Sigmoid colon (tissue), 7 donors: ENCODE measurements at regions of chr12 and their contacts with region 1.

Region 1: DNA sequence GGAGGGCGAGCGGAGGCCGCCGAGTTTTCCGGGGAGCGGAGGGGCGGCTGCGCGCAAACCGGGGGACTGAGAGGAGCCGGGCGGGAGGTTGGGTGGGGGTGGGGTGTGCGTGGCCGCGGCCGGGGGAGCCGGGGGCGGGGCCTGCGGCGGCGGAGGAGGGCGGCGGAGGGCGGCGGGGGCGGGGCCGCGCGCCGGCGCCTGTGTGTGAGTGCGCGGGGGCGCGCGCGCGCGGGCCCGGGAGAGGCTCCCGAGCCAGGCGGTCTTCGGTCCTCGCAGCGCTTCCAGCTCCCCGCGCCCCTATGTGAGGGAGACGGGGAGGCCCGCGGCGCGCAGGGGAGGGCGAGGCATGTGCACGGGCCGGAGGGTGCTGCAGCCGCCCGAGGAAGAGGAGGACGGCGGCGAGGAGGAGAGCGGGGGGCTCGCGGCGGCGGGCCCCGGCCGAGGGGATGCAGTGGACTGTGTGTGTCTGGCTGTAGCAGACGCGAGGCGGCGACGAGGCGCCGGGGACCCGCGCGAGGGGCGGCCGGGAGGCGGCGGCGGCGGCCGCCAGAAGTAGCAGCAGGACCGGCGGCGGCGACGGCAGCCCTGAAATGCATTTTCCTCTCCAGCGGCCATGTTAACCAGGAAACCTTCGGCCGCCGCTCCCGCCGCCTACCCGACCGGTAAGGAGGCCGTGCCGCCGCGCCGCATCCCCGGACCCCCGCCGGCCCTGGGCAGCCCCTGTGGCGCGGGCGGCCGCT is at the start of gene DYRK2:
- DNase-seq: peak; percentile 90
- H3K4me3 ChIP-seq: peak within 1 kb of the TSS; percentile 92 to 100 (median 98)
- H3K27ac ChIP-seq: peak within 1 kb of the TSS; percentile 97 to 100 (median 98)
- H3K4me1 ChIP-seq: peaks cover 0 to 46% (median 36%) of the 10 kb centered on the region in 4 donors
- H3K27me3 ChIP-seq: no peaks in the 10 kb centered on the region
- CTCF ChIP-seq: no peak
- EP300 ChIP-seq: no peak
- POLR2A ChIP-seq: peak; percentile 39 to 65
- total RNA-seq, gene DYRK2: 17.6 to 32.4 (median 23.3) TPM

Region 2: DNA sequence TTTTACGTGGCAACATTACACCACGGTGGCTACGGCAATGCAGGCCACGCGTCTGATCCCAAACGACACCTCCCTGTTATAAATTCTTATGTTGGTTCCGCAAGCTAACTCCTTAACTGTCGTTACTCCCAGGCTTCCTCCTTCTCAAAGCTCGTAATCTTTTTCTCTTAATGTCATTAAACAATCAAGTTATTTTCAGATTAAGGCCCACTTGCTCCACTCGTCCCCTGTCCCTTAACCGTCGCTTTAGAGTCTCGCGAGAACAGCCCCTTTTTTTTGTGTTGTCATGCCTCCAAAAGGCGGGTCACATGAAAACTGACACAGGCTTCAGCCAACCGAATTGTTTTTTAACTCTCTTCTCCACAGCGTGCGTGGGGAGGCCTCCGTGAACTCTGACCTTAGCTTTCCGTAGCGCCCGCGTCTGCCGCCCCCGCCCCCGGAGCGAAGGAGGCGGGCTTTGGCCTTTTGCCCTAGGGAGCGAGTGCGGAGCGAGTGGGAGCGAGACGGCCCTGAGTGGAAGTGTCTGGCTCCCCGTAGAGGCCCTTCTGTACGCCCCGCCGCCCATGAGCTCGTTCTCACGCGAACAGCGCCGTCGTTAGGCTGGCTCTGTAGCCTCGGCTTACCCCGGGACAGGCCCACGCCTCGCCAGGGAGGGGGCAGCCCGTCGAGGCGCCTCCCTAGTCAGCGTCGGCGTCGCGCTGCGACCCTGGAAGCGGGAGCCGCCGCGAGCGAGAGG is 379.6 kb before region 1 on chr12 and contains the start of gene CAND1:
- intact Hi-C with region 1: loop called (anchors 10 kb)
- DNase-seq: peak; percentile 99
- H3K4me3 ChIP-seq: peak within 1 kb of the TSS; percentile 78 to 96 (median 89)
- H3K27ac ChIP-seq: peak within 1 kb of the TSS; percentile 90 to 99 (median 99)
- H3K4me1 ChIP-seq: peaks cover 0 to 49% (median 42%) of the 10 kb centered on the region in 4 donors
- H3K27me3 ChIP-seq: no peaks in the 10 kb centered on the region
- CTCF ChIP-seq: no peak
- EP300 ChIP-seq: no peak
- POLR2A ChIP-seq: peak; percentile 52 to 61
- total RNA-seq, gene CAND1: 63.0 to 86.5 (median 77.2) TPM

Region 3: DNA sequence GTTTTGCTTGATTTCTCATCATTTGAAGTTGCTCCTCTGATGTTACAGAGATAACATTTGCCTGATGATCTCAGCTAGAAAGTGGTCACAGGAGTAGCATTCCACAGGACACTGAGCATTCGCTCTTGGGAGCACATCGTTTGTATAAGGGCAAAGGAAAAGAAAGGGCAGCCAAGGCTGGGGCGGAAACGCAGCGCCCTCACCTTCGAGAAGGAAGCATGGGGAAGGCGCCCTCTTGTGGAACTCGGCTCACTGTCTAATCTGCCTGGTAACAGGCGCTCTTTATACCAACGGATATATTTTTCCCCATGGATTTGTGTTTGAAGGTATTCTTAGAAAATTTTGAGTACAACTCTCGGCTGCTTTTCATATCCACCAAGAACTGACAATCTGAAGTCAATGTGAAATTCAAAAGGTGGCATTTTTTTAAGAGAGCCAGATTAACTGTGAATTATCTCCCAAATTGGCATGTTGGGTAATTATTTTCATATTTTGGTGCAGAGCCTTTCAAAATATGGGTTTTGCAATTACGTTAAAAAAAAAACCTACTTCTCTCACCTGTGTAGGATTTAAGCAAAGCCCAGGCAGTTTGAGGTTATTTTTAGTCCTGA is 206.8 kb before region 1 on chr12:
- intact Hi-C with region 1: loop called (anchors 5 kb)
- DNase-seq: peak; percentile 90
- H3K4me3 ChIP-seq: peak overlapping the region in 1 of 4 donors; percentile 2
- H3K27ac ChIP-seq: peak overlapping the region in 1 of 4 donors; percentile 4
- H3K4me1 ChIP-seq: peaks cover 0 to 17% (median 7%) of the 10 kb centered on the region in 4 donors
- H3K27me3 ChIP-seq: no peaks in the 10 kb centered on the region
- CTCF ChIP-seq: peak; percentile 14 to 82 (median 64)
- EP300 ChIP-seq: no peak
- POLR2A ChIP-seq: no peak

Region 4: GRCh38 chr12:67681105-67681778 is 32.6 kb after region 1 on chr12:
- intact Hi-C with region 1: loop called (anchors 2 kb)
- DNase-seq: no peak
- H3K4me3 ChIP-seq: no peak overlapping the region
- H3K27ac ChIP-seq: peak overlapping the region; percentile 71 to 89 (median 82)
- H3K4me1 ChIP-seq: peaks cover 0 to 40% (median 22%) of the 10 kb centered on the region in 4 donors
- H3K27me3 ChIP-seq: no peaks in the 10 kb centered on the region
- CTCF ChIP-seq: no peak
- EP300 ChIP-seq: peak in 1 of 4 donors; percentile 62
- POLR2A ChIP-seq: no peak

Region 5: DNA sequence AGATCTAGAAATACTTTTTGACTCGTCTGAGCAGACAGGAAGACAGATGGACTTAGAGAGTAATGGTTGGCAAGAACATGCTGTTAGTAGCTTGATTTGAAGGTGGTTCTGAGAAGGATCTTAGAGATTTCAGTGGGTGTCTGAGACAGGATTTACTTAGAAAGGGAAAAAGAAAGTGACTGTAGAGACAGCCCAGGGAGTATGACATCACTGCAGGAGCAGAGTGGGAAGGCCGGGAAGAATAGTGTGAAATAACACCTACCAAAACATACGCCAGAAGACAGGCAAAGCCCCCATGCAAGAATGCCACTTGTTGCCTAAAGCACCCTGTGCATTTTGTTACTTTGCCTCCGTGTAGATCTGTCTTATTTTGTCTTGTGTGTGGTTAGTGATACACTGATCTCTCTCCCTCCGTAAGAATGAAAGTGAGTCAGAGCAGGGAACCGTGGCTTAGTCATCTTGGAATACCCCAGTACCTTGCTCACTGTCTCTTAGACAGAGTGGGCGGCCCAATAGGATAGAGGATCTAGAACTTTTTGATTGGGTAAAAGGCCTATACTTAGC is 179.2 kb after region 1 on chr12:
- intact Hi-C with region 1: loop called (anchors 2 kb)
- DNase-seq: peak; percentile 73
- H3K4me3 ChIP-seq: peak overlapping the region; percentile 33 to 42 (median 37)
- H3K27ac ChIP-seq: peak overlapping the region; percentile 83 to 91 (median 89)
- H3K4me1 ChIP-seq: peaks cover 0 to 26% (median 16%) of the 10 kb centered on the region in 4 donors
- H3K27me3 ChIP-seq: no peaks in the 10 kb centered on the region
- CTCF ChIP-seq: no peak
- EP300 ChIP-seq: no peak
- POLR2A ChIP-seq: no peak